ENCODE measurements at regions of chr1 and their contacts with region 1.

Region 1: DNA sequence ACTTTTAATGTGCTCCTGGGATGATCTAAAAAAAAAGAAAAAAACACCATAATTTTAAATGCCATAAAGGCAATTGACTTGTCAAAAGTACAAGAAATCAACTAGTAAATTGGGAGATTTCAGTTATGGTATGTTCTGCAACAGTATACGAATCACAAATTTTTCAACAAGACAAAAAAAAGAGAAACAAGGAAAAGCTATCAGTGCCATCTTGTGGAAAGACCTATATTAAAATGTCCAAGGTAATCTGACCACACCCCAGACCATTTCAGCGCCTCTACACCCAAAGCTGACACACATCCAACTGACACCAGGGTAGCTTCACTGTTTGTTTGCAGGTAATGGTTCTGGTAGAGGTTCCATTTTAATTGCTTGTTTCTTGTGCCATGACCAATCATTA is 5.0 kb upstream of the DUSP23 start:
- DNase-seq: peak; percentile 81
- H3K4me3 Mint-ChIP-seq: no peak overlapping the region
- H3K27ac Mint-ChIP-seq: peak overlapping the region; percentile 89
- H3K4me1 Mint-ChIP-seq: peaks cover 68% of the 10 kb centered on the region
- H3K27me3 Mint-ChIP-seq: no peaks in the 10 kb centered on the region
- CTCF ChIP-seq: peak; percentile 63

Region 2: GRCh38 chr1:159171688-159172501 is 603.8 kb before region 1 on chr1:
- CTCF ChIA-PET with region 1: interaction called, 15 read pairs
- POLR2A ChIA-PET with region 1: no interaction called
- intact Hi-C with region 1: no loop called
- DNase-seq: peak; percentile 44
- H3K4me3 Mint-ChIP-seq: peak overlapping the region; percentile 83
- H3K27ac Mint-ChIP-seq: peak overlapping the region; percentile 1
- H3K4me1 Mint-ChIP-seq: peaks cover 60% of the 10 kb centered on the region
- H3K27me3 Mint-ChIP-seq: peaks cover 11% of the 10 kb centered on the region
- CTCF ChIP-seq: no peak

Region 3: GRCh38 chr1:159229486-159229885 is 546.2 kb before region 1 on chr1:
- CTCF ChIA-PET with region 1: interaction called, 14 read pairs
- POLR2A ChIA-PET with region 1: interaction called, 4 read pairs
- intact Hi-C with region 1: no loop called
- DNase-seq: no peak
- H3K4me3 Mint-ChIP-seq: no peak overlapping the region
- H3K27ac Mint-ChIP-seq: peak overlapping the region; percentile 20
- H3K4me1 Mint-ChIP-seq: peaks cover 27% of the 10 kb centered on the region
- H3K27me3 Mint-ChIP-seq: no peaks in the 10 kb centered on the region
- CTCF ChIP-seq: no peak

Region 4: GRCh38 chr1:159532922-159533321 is 242.8 kb before region 1 on chr1:
- CTCF ChIA-PET with region 1: no interaction called
- POLR2A ChIA-PET with region 1: no interaction called
- intact Hi-C with region 1: loop called (anchors 1 kb)
- DNase-seq: peak; percentile 60
- H3K4me3 Mint-ChIP-seq: no peak overlapping the region
- H3K27ac Mint-ChIP-seq: no peak overlapping the region
- H3K4me1 Mint-ChIP-seq: peaks cover 17% of the 10 kb centered on the region
- H3K27me3 Mint-ChIP-seq: no peaks in the 10 kb centered on the region
- CTCF ChIP-seq: no peak

Region 5: DNA sequence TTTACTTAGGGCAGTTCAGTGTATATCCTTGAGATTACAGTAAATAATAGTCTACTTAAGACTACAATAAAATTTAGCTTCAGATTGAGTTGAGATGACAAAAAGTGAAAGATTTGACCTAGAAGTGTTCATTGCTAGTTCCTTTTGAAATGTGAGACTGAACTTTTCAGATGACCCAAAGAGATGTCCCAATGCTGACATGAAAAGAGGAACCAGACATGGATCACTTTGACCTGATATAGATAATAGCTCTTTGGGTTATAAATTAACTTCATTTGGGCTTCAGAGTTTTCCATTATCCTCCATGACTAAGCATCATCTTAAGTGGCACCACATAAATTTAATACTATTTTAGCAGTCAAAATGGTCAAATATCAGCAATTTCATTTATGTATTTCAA is 214.2 kb before region 1 on chr1:
- CTCF ChIA-PET with region 1: no interaction called
- POLR2A ChIA-PET with region 1: no interaction called
- intact Hi-C with region 1: no loop called
- DNase-seq: no peak
- H3K4me3 Mint-ChIP-seq: no peak overlapping the region
- H3K27ac Mint-ChIP-seq: no peak overlapping the region
- H3K4me1 Mint-ChIP-seq: no peaks in the 10 kb centered on the region
- H3K27me3 Mint-ChIP-seq: no peaks in the 10 kb centered on the region
- CTCF ChIP-seq: no peak

Region 6: GRCh38 chr1:159752135-159752580 is 23.6 kb before region 1 on chr1:
- CTCF ChIA-PET with region 1: interaction called, 17 read pairs
- POLR2A ChIA-PET with region 1: interaction called, 12 read pairs
- intact Hi-C with region 1: loop called (anchors 2 kb)
- DNase-seq: peak; percentile 100
- H3K4me3 Mint-ChIP-seq: no peak overlapping the region
- H3K27ac Mint-ChIP-seq: peak overlapping the region; percentile 78
- H3K4me1 Mint-ChIP-seq: peaks cover 44% of the 10 kb centered on the region
- H3K27me3 Mint-ChIP-seq: no peaks in the 10 kb centered on the region
- CTCF ChIP-seq: no peak

Region 7: DNA sequence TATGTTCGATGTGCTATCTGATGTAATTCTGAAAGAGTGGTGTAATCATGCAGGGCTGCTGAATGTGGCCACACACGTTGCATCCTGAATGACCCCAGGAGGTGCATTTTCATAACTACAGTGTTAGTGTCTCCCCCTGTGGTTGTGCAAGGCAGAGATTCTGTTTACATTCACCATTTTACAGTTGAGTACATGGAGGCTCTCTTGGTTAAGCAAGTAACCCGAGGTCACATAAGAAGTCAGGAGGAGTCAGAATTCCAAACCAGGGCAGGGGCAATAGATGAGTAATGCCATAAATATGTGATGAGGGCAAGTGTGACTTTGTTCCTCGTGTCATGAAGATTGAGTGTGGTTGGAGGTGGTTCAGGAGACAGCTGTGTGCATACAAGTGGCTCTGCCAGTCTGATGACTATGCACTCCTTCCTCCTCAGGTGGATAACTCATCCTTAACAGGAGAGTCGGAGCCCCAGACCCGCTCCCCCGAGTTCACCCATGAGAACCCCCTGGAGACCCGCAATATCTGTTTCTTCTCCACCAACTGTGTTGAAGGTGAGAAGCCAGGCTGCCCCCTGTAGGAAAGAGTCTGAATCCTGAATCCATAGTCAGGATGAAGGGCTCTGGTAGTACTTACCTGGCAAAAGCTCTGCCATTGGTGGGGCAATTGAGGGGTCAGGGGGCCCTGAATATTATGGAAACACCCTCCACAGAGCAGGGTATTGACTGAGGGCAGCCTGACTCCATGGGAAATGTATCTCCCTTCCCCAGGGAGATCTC is 349.2 kb after region 1 on chr1:
- CTCF ChIA-PET with region 1: no interaction called
- POLR2A ChIA-PET with region 1: no interaction called
- intact Hi-C with region 1: no loop called
- DNase-seq: peak; percentile 94
- H3K4me3 Mint-ChIP-seq: no peak overlapping the region
- H3K27ac Mint-ChIP-seq: peak overlapping the region; percentile 93
- H3K4me1 Mint-ChIP-seq: peaks cover 41% of the 10 kb centered on the region
- H3K27me3 Mint-ChIP-seq: no peaks in the 10 kb centered on the region
- CTCF ChIP-seq: peak; percentile 36

Measured in MCF 10A (cell line).